Mammary epithelial cell (primary cell): ENCODE measurements at regions of chr6 and their contacts with region 1.

Region 1: DNA sequence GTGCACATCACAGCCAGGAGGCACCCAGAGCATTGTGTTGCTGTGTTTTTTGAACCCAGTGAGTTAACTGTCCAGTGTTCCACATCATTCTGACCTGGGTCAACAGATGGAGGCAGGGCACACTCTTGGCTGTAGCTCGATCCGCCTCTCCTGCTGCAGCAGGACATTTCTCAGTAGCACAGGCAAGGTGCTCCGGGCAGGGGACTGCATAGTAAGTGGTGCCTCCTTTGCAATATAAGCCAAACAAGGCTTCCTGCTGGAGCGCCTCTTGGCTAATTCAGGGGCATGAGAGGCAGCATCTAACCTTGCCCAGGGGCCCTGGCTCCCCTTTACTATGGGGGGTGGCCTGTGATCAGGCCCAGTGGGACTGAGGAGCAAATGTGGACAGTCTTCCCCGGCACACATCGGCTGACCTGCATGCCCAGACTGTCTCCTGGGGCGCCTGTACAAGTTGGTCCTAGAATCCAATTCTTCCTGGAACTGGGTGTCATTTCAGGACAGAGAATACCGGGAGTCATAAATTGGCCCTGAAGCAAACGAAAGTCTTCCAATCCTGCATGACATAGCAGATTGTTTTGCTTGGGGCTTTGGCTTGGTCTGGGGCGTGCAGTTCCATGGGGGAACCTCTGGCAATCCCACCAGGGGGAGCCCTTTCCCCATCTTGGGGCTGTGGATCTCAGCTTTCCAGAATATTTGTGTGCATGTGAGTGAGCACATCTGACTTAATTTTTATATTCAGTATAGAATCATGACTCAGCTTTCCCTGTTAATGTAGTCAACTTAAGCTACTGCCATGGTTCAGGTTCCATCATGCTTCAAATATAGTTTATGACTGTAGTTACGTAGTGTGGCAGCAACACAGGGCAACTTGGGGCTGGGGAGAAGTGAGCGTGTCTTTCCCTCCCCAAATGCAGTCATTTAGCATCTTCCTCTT is 56.0 kb upstream of the DDR1 start:
- DNase-seq: peak; percentile 88
- H3K4me3 ChIP-seq: no peak overlapping the region
- H3K27ac ChIP-seq: peak overlapping the region; percentile 58
- H3K4me1 ChIP-seq: peaks cover 28% of the 10 kb centered on the region
- H3K27me3 ChIP-seq: no peaks in the 10 kb centered on the region
- CTCF ChIP-seq: peak; percentile 95

Region 2: GRCh38 chr6:30678964-30679726 is 149.1 kb before region 1 on chr6:
- CTCF ChIA-PET with region 1: no interaction called
- dilution Hi-C with region 1: no loop called
- in situ Hi-C with region 1: no loop called
- intact Hi-C with region 1: loop called (anchors 5 kb)
- DNase-seq: peak; percentile 67
- H3K4me3 ChIP-seq: peak overlapping the region in 2 of 3 experiments; percentile 22 to 27
- H3K27ac ChIP-seq: no peak overlapping the region
- H3K4me1 ChIP-seq: peaks cover 36% of the 10 kb centered on the region
- H3K27me3 ChIP-seq: no peaks in the 10 kb centered on the region
- CTCF ChIP-seq: peak; percentile 85 to 98

Region 3: GRCh38 chr6:30862156-30862875 is 34.0 kb after region 1 on chr6:
- CTCF ChIA-PET with region 1: no interaction called
- dilution Hi-C with region 1: loop called (anchors 5 kb)
- in situ Hi-C with region 1: no loop called
- intact Hi-C with region 1: no loop called
- DNase-seq: no peak
- H3K4me3 ChIP-seq: no peak overlapping the region
- H3K27ac ChIP-seq: no peak overlapping the region
- H3K4me1 ChIP-seq: no peaks in the 10 kb centered on the region
- H3K27me3 ChIP-seq: no peaks in the 10 kb centered on the region
- CTCF ChIP-seq: no peak

Region 4: DNA sequence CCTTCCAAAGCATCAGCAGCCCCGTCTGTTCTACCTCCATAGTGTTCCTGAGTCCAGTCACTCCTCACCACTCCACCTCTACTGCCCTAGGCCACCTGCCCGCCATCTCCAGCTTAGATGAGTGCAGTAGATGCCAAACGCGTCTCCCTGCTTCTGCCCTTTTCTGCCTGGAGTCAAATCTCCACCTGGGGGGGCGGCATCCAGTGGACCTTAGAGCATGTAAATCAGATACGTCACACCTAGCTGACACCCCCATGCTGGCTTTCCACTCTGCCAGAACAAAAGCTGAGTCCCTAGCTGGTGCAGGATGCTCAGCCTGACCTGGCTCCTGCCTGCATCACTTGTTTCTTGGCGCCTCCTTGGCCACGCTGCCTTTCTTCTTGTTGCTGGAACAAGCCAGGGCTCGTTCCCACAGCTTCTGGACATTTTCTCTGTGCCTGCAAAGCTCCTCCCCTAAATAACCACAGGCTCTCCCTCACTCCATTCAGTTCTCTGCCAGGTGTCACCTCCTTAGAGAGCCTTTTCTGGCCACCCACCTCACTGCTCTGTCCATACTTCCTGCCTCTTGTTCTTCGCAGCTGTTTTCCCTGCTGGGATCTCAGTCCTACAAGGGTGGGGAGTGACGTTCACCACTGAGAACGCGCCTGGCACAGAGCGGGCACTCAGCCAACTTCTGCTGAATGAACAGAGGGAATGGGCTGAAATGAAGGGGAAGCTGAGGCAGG is 61.8 kb after region 1 on chr6:
- CTCF ChIA-PET with region 1: no interaction called
- dilution Hi-C with region 1: loop called (anchors 10 kb)
- in situ Hi-C with region 1: no loop called
- intact Hi-C with region 1: no loop called
- DNase-seq: peak; percentile 93
- H3K4me3 ChIP-seq: no peak overlapping the region
- H3K27ac ChIP-seq: peak overlapping the region; percentile 29
- H3K4me1 ChIP-seq: peaks cover 58% of the 10 kb centered on the region
- H3K27me3 ChIP-seq: no peaks in the 10 kb centered on the region
- CTCF ChIP-seq: no peak

Region 5: GRCh38 chr6:31087494-31088089 is 259.3 kb after region 1 on chr6:
- CTCF ChIA-PET with region 1: interaction called, 9 read pairs
- dilution Hi-C with region 1: no loop called
- in situ Hi-C with region 1: loop called (anchors 5 to 10 kb)
- intact Hi-C with region 1: loop called (anchors 1 kb)
- DNase-seq: peak; percentile 73
- H3K4me3 ChIP-seq: no peak overlapping the region
- H3K27ac ChIP-seq: no peak overlapping the region
- H3K4me1 ChIP-seq: peaks cover 8% of the 10 kb centered on the region
- H3K27me3 ChIP-seq: no peaks in the 10 kb centered on the region
- CTCF ChIP-seq: peak; percentile 74

Region 6: GRCh38 chr6:31197559-31198305 is 369.4 kb after region 1 on chr6:
- CTCF ChIA-PET with region 1: no interaction called
- dilution Hi-C with region 1: no loop called
- in situ Hi-C with region 1: no loop called
- intact Hi-C with region 1: loop called (anchors 10 kb)
- DNase-seq: peak; percentile 82
- H3K4me3 ChIP-seq: peak overlapping the region; percentile 51 to 58 (median 57)
- H3K27ac ChIP-seq: peak overlapping the region; percentile 87
- H3K4me1 ChIP-seq: peaks cover 10% of the 10 kb centered on the region
- H3K27me3 ChIP-seq: no peaks in the 10 kb centered on the region
- CTCF ChIP-seq: no peak